Activated CD8-positive, alpha-beta memory T cell treated with anti-CD3 and anti-CD28 coated beads, Interleukin-2, amount 10 ng/mL, durations not matched to agents 7 days and 5 days (primary cell): ENCODE measurements at regions of chr2 and their contacts with region 1.

Region 1: GRCh38 chr2:149017116-149017985 is 21.1 kb upstream of the LYPD6B start:
- DNase-seq: peak; percentile 83
- ATAC-seq: peak; percentile 70
- H3K4me3 Mint-ChIP-seq: no peak overlapping the region
- H3K27ac Mint-ChIP-seq: no peak overlapping the region
- H3K4me1 Mint-ChIP-seq: no peaks in the 10 kb centered on the region
- H3K27me3 Mint-ChIP-seq: no peaks in the 10 kb centered on the region

Region 2: DNA sequence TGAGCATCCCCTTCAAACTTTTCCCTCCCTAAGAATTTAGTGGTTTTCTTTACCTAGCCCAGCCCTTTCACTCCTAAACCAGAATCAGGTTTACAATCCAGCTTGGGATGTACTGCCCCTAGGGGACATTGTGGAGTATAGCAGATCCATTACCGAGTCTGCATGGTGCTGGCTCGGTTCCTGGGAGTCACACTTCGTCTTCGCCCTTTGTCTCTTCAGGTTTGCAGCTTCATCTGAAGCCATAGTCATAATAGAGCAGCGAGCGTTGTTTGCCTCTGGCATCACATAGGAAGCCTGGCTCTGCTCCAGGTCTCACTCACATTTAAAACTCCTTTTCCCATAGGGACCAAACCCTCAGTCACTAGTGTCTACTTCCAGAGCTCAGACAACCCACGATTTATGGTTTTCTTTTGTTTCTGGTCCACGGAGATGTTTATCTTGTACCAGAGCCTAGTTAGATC is 296.2 kb after region 1 on chr2:
- CTCF ChIA-PET with region 1: interaction called, 11 read pairs
- DNase-seq: no peak
- ATAC-seq: no peak
- H3K4me3 Mint-ChIP-seq: no peak overlapping the region
- H3K27ac Mint-ChIP-seq: no peak overlapping the region
- H3K4me1 Mint-ChIP-seq: no peaks in the 10 kb centered on the region
- H3K27me3 Mint-ChIP-seq: peaks cover 8% of the 10 kb centered on the region

Region 3: DNA sequence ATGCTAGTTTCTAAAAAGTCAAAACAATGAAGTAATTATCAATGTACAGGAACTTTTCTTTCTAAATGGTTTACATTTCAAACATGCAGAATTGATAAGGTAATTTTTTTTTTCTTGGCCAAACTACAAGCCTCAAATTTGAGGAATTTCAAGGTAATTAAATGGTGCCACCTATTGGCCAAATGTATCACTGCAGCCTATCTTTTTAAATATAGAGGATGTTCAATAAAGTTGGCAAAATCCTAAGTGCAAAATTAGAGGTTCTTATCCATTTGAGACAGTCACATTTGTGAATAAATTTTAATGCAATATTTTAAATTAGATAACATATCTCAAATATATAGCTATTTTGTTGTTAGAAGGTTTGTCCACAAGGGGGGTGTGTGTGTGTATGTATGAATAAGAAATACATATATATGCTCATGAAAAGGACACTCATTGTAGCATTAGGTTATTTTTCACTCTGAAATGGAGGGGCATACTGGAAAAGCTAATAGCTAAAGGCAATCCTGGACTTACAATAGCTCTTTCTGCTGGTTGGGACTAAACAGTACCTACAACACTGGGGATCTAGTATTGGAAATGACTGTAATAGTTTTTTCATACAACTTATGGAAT is 544.1 kb after region 1 on chr2:
- CTCF ChIA-PET with region 1: interaction called, 24 read pairs
- DNase-seq: no peak
- ATAC-seq: peak; percentile 23
- H3K4me3 Mint-ChIP-seq: no peak overlapping the region
- H3K27ac Mint-ChIP-seq: no peak overlapping the region
- H3K4me1 Mint-ChIP-seq: peaks cover 5% of the 10 kb centered on the region
- H3K27me3 Mint-ChIP-seq: peaks cover 3% of the 10 kb centered on the region